K562 (cell line): ENCODE measurements at regions of chr1 and their contacts with region 1.

Region 1: DNA sequence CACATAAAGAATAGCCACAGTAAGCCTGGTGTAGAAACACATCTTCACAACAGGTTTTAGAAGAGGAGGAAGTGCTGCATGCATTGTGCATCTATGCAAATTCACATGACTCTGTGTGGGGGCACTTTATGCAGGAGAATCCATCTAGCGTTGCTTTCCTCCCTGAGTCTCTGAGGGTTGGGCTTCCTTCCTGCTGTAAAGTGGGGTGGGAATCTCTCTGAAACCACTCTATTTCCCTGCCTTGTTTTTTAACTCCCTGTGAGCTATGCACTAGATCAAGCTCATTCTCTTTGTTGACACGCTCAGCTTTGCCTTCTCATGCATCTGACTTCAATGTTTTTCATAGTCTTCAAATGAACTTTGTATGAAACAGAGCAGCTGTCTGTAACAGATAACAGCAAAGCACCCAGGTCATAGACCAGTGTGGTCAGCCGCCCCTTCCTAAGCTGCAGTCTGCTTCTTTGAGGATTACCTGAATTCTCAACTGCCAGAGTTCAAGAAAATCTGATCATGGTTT is 102.7 kb upstream of the DPH5 start:
- DNase-seq: peak; percentile 68 to 88 (median 77)
- ATAC-seq: peak; percentile 96
- H3K4me3 ChIP-seq: no peak overlapping the region
- H3K27ac ChIP-seq: peak overlapping the region; percentile 72
- H3K4me1 ChIP-seq: peaks cover 0 to 29% of the 10 kb centered on the region in 2 experiments; a peak in 4 of 5 replicates
- H3K27me3 ChIP-seq: no peaks in the 10 kb centered on the region
- CTCF ChIP-seq: no peak; a peak in 1 of 6 replicates
- EP300 ChIP-seq: peak; percentile 92
- POLR2A ChIP-seq: no peak
- RAD21 ChIP-seq: peak in 1 of 2 experiments; percentile 8; a peak in 1 of 4 replicates

Region 2: GRCh38 chr1:100794748-100795645 is 333.3 kb before region 1 on chr1:
- CTCF ChIA-PET with region 1: no interaction called
- POLR2A ChIA-PET with region 1: no interaction called
- in situ Hi-C with region 1: no loop called
- intact Hi-C with region 1: no loop called
- DNase-seq: peak in 2 of 4 experiments; percentile 13 to 31
- ATAC-seq: peak; percentile 69
- H3K4me3 ChIP-seq: no peak overlapping the region
- H3K27ac ChIP-seq: no peak overlapping the region
- H3K4me1 ChIP-seq: peaks cover 0 to 12% of the 10 kb centered on the region in 2 experiments; a peak in 3 of 5 replicates
- H3K27me3 ChIP-seq: no peaks in the 10 kb centered on the region
- CTCF ChIP-seq: no peak
- EP300 ChIP-seq: no peak
- POLR2A ChIP-seq: no peak
- RAD21 ChIP-seq: no peak

Region 3: GRCh38 chr1:100955322-100955721 is 172.9 kb before region 1 on chr1:
- CTCF ChIA-PET with region 1: no interaction called
- POLR2A ChIA-PET with region 1: no interaction called
- in situ Hi-C with region 1: no loop called
- intact Hi-C with region 1: no loop called
- DNase-seq: no peak
- ATAC-seq: no peak
- H3K4me3 ChIP-seq: no peak overlapping the region
- H3K27ac ChIP-seq: no peak overlapping the region
- H3K4me1 ChIP-seq: no peaks in the 10 kb centered on the region
- H3K27me3 ChIP-seq: no peaks in the 10 kb centered on the region
- CTCF ChIP-seq: no peak
- EP300 ChIP-seq: no peak
- POLR2A ChIP-seq: no peak
- RAD21 ChIP-seq: no peak

Region 4: DNA sequence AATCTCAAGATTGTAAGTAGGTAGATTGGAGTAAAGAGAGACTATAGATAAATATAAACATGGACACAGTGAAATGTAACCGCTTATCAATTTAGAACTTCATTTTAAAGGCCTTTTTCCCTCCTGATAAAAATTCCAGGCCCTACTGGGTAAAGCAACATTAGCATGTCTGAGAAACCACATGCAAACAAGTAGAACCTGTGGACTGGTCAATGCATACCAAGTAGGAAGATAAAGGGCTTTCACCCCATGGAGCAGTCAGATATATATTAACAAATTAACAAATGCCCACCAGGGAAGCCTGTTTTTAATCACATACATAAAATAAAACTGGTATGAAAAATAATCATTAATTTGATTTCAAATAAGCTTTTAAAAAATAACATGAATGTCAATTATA is 110.8 kb before region 1 on chr1:
- CTCF ChIA-PET with region 1: no interaction called
- POLR2A ChIA-PET with region 1: no interaction called
- in situ Hi-C with region 1: no loop called
- intact Hi-C with region 1: loop called (anchors 2 kb)
- DNase-seq: no peak
- ATAC-seq: no peak
- H3K4me3 ChIP-seq: no peak overlapping the region
- H3K27ac ChIP-seq: no peak overlapping the region
- H3K4me1 ChIP-seq: no peaks in the 10 kb centered on the region
- H3K27me3 ChIP-seq: no peaks in the 10 kb centered on the region
- CTCF ChIP-seq: no peak
- EP300 ChIP-seq: no peak
- POLR2A ChIP-seq: no peak
- RAD21 ChIP-seq: no peak

Region 5: GRCh38 chr1:101282314-101283038 is 154.2 kb after region 1 on chr1:
- CTCF ChIA-PET with region 1: no interaction called
- POLR2A ChIA-PET with region 1: no interaction called
- in situ Hi-C with region 1: loop called (anchors 10 kb)
- intact Hi-C with region 1: loop called (anchors 2 kb)
- DNase-seq: no peak
- ATAC-seq: no peak
- H3K4me3 ChIP-seq: no peak overlapping the region
- H3K27ac ChIP-seq: no peak overlapping the region
- H3K4me1 ChIP-seq: peaks cover 9 to 33% of the 10 kb centered on the region in 2 experiments
- H3K27me3 ChIP-seq: no peaks in the 10 kb centered on the region; a peak in 1 of 5 replicates
- CTCF ChIP-seq: no peak
- EP300 ChIP-seq: no peak
- POLR2A ChIP-seq: no peak
- RAD21 ChIP-seq: no peak